AG04449 (cell line): ENCODE measurements at regions of chr4 and their contacts with region 1.

Region 1: DNA sequence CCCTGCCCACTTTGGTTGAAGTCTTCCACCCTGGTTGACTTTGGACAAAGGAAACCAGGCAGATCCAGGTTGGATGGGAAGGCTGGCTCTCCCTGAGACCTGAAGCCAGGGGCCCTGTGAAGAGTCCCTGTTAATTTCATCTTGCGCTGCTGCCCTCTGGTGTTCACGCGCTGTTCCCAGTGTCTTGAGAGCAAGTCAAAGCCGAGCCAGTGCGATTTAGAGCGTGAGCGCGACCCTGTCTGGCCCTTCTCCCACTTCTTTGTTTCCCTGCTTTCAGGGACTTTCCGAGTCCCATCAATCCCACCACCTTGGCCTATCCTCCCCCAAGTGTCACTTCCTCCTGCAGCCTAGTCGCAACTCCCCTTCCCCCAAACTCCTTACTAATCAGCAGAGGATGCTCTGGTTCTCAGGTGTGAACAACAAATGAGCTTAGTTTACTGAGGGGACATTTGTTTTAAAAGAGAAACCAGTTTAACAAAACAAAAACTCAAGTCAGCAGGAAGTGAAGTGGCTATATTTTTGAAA is 25.8 kb upstream of the CHRNA9 start:
- DNase-seq: no peak
- H3K4me3 ChIP-seq: no peak overlapping the region
- CTCF ChIP-seq: peak; percentile 91

Region 2: DNA sequence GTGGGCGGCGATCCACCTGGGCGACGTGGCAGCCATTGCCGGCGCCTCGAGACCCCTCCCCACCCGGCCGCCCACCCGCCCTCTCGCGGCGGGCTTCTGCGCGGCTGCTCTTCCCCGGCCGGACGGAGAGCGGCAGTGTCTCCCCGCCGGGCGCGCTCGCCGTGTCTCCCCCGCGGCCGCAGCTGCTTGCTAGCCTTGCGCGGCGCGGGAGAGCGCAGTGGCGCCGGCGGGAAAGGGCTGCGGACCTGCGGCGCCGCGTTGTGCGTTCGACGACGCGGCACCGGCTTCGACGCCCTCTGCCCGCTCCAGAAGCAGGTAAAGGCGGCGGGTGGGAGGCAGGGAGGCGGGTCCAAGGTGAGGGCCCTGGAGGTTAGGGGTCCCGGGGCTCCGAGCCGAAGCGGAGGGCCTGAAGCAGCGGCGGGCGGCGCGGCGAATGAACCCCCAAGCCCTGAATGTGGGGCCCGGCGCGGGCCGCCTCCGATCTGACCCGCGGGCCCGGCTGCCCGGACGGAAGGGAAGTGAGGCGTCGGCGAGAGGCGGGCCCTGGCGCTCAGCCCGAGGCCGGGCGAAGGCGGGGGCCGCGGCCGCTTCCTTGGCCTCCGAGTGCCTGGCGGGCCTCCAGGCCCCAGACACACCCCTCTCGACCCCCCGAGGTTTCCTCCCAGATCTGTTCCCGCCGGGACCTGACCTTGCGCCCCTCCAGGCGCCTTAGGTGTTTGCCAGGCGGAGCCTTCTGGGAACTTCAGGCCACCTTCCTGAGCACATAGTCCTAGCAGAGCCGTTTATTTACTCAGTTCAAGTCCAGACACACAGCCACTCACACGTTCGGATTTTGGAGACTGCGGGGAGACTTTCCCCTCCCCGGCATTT is 252.4 kb before region 1 on chr4 and contains the start of gene N4BP2:
- CTCF ChIA-PET with region 1: interaction called, 17 read pairs
- POLR2A ChIA-PET with region 1: interaction called, 5 read pairs
- DNase-seq: no peak
- H3K4me3 ChIP-seq: peak within 1 kb of the TSS; percentile 80
- CTCF ChIP-seq: peak; percentile 88

Region 3: DNA sequence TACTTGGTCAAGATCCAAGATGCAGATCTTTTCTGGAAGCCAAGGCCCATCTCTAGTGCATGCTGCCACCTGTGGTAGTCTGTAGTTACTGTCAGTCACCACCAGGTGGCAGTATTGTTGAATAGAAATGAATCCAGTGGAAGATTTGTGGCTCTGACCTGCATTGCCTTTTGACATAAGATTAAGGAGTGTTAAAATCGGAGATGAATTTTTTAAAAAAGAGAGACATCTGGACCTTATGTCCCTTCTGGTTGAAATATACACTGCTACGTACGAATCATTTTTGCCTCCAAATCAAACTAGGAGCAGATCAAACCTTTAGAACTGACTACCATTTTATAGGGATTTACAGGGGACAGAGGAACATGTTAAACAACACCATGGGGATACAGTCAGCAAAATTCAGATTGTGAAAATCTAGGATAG is 159.3 kb before region 1 on chr4:
- CTCF ChIA-PET with region 1: interaction called, 89 read pairs
- POLR2A ChIA-PET with region 1: no interaction called
- DNase-seq: no peak
- H3K4me3 ChIP-seq: no peak overlapping the region
- CTCF ChIP-seq: peak; percentile 72

Region 4: GRCh38 chr4:40292313-40292759 is 17.0 kb before region 1 on chr4:
- CTCF ChIA-PET with region 1: interaction called, 14 read pairs
- POLR2A ChIA-PET with region 1: no interaction called
- DNase-seq: no peak
- H3K4me3 ChIP-seq: no peak overlapping the region
- CTCF ChIP-seq: no peak

Region 5: DNA sequence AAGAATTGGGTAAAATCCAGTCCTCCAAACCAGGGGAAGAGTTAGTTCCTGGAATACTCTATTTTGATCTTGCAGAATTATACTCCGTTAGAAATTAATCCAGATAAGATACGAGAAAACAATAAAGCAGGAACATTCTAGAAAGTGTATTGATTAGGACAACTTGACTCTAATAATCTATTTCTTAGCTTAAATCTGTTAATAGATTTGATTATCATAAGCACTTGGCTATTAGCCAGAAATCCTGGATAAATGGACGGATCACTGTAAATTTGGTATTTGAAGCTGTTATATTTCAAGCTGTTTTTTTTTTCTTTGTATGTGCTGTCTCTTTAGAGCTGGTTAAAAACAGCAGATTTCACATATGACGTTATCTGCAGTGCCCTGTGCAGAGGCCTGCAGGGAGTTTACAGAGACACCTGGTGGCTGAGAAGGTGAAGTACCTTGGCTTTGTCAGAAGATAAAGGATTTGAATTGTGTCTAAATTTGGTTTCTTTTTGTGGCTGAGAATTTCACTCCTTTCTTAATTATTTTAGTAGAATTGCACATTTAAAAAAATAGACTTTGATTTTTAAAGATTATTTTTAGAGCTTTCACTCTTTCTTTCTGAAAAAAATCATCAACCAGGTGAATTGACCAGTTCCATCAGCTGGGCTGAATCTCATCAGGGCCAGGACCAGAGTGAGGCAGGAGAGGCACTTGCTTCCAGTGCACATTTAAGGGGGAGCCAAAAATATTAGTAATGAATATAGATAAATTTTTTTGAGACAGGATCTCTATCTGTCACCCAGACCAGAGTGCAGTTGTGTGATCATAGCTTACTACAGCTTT is 16.1 kb after region 1 on chr4:
- CTCF ChIA-PET with region 1: interaction called, 79 read pairs
- POLR2A ChIA-PET with region 1: no interaction called
- DNase-seq: no peak
- H3K4me3 ChIP-seq: no peak overlapping the region
- CTCF ChIP-seq: peak; percentile 75

Region 6: GRCh38 chr4:40550948-40551462 is 241.7 kb after region 1 on chr4:
- CTCF ChIA-PET with region 1: no interaction called
- POLR2A ChIA-PET with region 1: no interaction called
- DNase-seq: no peak
- H3K4me3 ChIP-seq: no peak overlapping the region
- CTCF ChIP-seq: peak; percentile 15